ENCODE measurements at regions of chr2 and their contacts with region 1.

Region 1: GRCh38 chr2:174522553-174522952 is 35.7 kb upstream of the GPR155 start:
- DNase-seq: no peak
- H3K4me3 ChIP-seq: no peak overlapping the region
- H3K27ac ChIP-seq: no peak overlapping the region
- H3K4me1 ChIP-seq: no peaks in the 10 kb centered on the region
- H3K27me3 ChIP-seq: no peaks in the 10 kb centered on the region
- CTCF ChIP-seq: peak in 1 of 3 experiments; percentile 30

Region 2: GRCh38 chr2:174487108-174487819 is 35.3 kb before region 1 on chr2:
- dilution Hi-C with region 1: loop called (anchors 5 kb)
- DNase-seq: peak; percentile 81
- H3K4me3 ChIP-seq: peak overlapping the region; percentile 82 to 91 (median 90)
- H3K27ac ChIP-seq: peak overlapping the region; percentile 87
- H3K4me1 ChIP-seq: peaks cover 15% of the 10 kb centered on the region
- H3K27me3 ChIP-seq: no peaks in the 10 kb centered on the region
- CTCF ChIP-seq: no peak

Measured in keratinocyte (primary cell).